Natural killer cell (primary cell): ENCODE measurements at regions of chr2 and their contacts with region 1.

Region 1: GRCh38 chr2:205675861-205676516 is 6.3 kb upstream of the NRP2 start:
- DNase-seq: peak in 1 of 2 donors; percentile 45
- ATAC-seq: no peak
- H3K4me3 ChIP-seq: no peak overlapping the region
- H3K4me3 Mint-ChIP-seq: no peak overlapping the region
- H3K27ac ChIP-seq: no peak overlapping the region
- H3K27ac Mint-ChIP-seq: no peak overlapping the region
- H3K4me1 ChIP-seq: no peaks in the 10 kb centered on the region
- H3K4me1 Mint-ChIP-seq: no peaks in the 10 kb centered on the region
- H3K27me3 ChIP-seq: peaks cover 7% of the 10 kb centered on the region
- H3K27me3 Mint-ChIP-seq: peaks cover 16 to 39% of the 10 kb centered on the region in 2 donors
- CTCF ChIP-seq: peak; percentile 28

Region 2: DNA sequence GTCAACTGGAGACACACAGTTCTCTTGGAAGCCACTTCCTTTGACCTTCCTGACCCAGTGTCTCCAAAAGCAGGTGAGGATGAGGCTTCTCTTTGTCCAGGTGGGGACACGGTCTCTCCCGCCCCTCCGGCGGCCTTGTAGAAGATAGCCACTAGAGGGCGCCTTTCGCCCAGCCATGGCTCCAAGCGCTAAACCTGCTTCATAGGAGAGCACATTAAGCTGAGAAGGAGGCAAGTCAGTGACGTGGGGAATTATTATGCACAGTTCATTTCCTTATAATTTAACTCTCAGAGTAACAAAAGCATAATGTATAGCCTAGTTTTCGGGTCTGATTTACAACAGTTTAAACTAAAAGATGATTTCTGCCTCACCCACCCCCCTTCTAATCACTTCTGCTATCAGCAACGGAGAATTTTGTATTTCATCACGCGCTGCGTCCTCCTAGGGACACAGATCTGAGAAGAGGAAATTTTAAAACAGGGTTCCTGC is 1530.7 kb before region 1 on chr2:
- intact Hi-C with region 1: loop called (anchors 10 kb)
- DNase-seq: peak; percentile 61 to 86
- ATAC-seq: peak; percentile 91 to 99 (median 98)
- H3K4me3 ChIP-seq: peak overlapping the region; percentile 19
- H3K4me3 Mint-ChIP-seq: peak overlapping the region; percentile 86
- H3K27ac ChIP-seq: no peak overlapping the region
- H3K27ac Mint-ChIP-seq: peak overlapping the region in 1 of 2 donors; percentile 45
- H3K4me1 ChIP-seq: peaks cover 5% of the 10 kb centered on the region
- H3K4me1 Mint-ChIP-seq: peaks cover 11 to 12% of the 10 kb centered on the region in 2 donors
- H3K27me3 ChIP-seq: no peaks in the 10 kb centered on the region
- H3K27me3 Mint-ChIP-seq: peaks cover 23 to 46% of the 10 kb centered on the region in 2 donors
- CTCF ChIP-seq: peak; percentile 98

Region 3: DNA sequence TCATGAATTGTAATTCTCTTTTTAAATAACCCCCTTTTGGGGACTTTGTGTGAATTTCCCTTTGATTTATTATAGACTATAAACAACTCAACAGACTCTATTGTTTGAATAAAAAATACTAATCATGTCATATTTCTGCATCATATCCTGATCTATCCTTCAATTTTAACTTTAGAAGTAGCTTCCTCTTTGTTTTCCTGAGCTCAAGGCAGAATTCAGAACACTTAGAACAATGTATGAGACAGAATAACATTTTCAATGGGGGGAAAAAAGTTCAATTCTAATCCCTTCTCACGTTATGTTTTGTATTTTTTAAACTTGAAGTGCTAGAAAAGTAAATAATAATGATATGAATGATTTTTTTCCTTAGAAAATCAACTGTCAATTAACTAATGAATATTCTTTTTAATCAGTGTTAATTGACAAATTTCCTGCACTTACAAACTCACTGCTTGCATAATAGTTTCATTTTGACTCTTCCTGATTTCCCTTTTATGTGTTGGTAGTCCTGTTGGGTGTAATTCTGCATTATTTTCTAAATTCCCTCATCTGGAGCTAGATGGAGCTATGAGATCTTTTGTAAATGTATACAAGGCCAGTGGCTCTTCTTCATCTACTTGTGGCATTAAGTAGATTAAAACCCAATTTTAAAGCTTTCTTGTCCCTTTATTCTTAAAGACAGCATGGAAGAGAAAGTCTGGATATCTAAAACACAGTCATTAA is 804.6 kb before region 1 on chr2:
- intact Hi-C with region 1: loop called (anchors 5 kb)
- DNase-seq: peak in 1 of 2 donors; percentile 61
- ATAC-seq: no peak
- H3K4me3 ChIP-seq: no peak overlapping the region
- H3K4me3 Mint-ChIP-seq: no peak overlapping the region
- H3K27ac ChIP-seq: no peak overlapping the region
- H3K27ac Mint-ChIP-seq: no peak overlapping the region
- H3K4me1 ChIP-seq: no peaks in the 10 kb centered on the region
- H3K4me1 Mint-ChIP-seq: no peaks in the 10 kb centered on the region
- H3K27me3 ChIP-seq: no peaks in the 10 kb centered on the region
- H3K27me3 Mint-ChIP-seq: peaks cover 0 to 6% of the 10 kb centered on the region in 2 donors
- CTCF ChIP-seq: no peak

Region 4: DNA sequence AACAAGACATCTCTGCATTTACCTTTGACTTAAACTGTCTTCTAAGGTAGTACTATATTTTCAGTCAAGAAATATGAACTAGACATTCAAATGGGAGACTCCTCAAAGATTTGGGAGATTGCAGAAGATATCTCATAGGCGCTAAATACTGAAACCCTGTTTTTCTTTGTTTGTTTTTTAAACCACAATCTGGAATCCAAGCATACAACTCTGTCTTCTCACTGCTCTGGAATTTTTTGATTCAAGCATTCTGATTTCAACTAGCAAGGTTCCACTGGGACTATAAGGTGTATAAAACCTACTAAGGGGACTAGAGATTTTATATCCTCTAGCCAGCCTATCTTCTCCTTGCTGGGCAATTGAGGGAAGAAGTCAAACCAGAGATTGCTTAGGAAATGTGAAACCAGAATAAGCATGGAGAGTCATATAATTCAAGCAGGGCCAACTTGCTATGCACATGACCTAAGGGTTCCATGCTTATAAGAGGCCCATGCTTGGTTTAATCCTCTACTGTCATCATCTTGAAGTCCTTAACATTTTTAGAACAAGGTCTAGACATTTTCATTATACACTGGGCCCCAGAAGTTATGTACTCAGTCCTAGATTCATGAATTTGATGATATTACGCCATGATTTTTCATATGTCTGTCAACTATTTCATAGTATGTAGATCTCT is 725.2 kb before region 1 on chr2:
- intact Hi-C with region 1: no loop called
- DNase-seq: no peak
- ATAC-seq: no peak
- H3K4me3 ChIP-seq: no peak overlapping the region
- H3K4me3 Mint-ChIP-seq: no peak overlapping the region
- H3K27ac ChIP-seq: no peak overlapping the region
- H3K27ac Mint-ChIP-seq: no peak overlapping the region
- H3K4me1 ChIP-seq: no peaks in the 10 kb centered on the region
- H3K4me1 Mint-ChIP-seq: peaks cover 0 to 10% of the 10 kb centered on the region in 2 donors
- H3K27me3 ChIP-seq: no peaks in the 10 kb centered on the region
- H3K27me3 Mint-ChIP-seq: no peaks in the 10 kb centered on the region
- CTCF ChIP-seq: no peak

Region 5: DNA sequence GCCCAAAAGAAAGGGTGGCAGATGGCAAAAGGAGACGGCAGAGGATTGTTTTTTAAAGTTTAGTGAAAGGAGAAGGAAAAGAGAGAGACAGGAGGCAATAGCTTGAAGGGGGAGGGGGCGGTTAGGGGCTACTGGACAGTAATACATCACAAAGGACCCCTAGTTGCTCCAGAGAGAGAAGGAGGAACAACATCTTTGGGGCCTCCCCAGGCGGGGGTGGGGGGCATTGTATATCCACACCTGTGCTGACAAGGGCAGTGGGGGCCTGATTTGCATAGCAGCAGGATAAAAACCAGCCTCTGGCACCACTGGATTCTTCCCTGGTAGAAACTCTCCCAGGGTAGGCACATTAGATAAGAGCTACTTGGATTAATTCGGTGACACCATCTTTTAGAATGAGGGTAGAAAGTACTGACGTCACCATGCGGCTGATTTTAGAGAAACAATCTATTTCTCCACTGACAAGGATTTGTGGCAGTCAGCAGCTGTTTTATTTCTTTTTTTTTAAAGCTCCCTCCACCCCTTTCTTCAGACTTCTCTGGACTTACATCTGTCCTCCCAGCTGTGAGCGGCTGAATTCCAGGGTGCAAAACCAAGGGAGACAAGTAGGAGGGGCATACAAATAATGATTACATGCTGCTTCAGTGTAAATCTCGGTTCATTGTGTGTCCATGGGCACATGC is 193.4 kb before region 1 on chr2:
- intact Hi-C with region 1: no loop called
- DNase-seq: no peak
- ATAC-seq: no peak
- H3K4me3 ChIP-seq: no peak overlapping the region
- H3K4me3 Mint-ChIP-seq: no peak overlapping the region
- H3K27ac ChIP-seq: no peak overlapping the region
- H3K27ac Mint-ChIP-seq: no peak overlapping the region
- H3K4me1 ChIP-seq: no peaks in the 10 kb centered on the region
- H3K4me1 Mint-ChIP-seq: no peaks in the 10 kb centered on the region
- H3K27me3 ChIP-seq: no peaks in the 10 kb centered on the region
- H3K27me3 Mint-ChIP-seq: no peaks in the 10 kb centered on the region
- CTCF ChIP-seq: no peak

Region 6: GRCh38 chr2:205686783-205687640 is 11.0 kb after region 1 on chr2:
- intact Hi-C with region 1: no loop called
- DNase-seq: no peak
- ATAC-seq: no peak
- H3K4me3 ChIP-seq: no peak overlapping the region
- H3K4me3 Mint-ChIP-seq: no peak overlapping the region
- H3K27ac ChIP-seq: no peak overlapping the region
- H3K27ac Mint-ChIP-seq: no peak overlapping the region
- H3K4me1 ChIP-seq: peaks cover 15% of the 10 kb centered on the region
- H3K4me1 Mint-ChIP-seq: no peaks in the 10 kb centered on the region
- H3K27me3 ChIP-seq: peaks cover 26% of the 10 kb centered on the region
- H3K27me3 Mint-ChIP-seq: peaks cover 41 to 52% of the 10 kb centered on the region in 2 donors
- CTCF ChIP-seq: no peak